Left ventricle myocardium superior (tissue), 1 donor: ENCODE measurements at regions of chr17 and their contacts with region 1.

Region 1: DNA sequence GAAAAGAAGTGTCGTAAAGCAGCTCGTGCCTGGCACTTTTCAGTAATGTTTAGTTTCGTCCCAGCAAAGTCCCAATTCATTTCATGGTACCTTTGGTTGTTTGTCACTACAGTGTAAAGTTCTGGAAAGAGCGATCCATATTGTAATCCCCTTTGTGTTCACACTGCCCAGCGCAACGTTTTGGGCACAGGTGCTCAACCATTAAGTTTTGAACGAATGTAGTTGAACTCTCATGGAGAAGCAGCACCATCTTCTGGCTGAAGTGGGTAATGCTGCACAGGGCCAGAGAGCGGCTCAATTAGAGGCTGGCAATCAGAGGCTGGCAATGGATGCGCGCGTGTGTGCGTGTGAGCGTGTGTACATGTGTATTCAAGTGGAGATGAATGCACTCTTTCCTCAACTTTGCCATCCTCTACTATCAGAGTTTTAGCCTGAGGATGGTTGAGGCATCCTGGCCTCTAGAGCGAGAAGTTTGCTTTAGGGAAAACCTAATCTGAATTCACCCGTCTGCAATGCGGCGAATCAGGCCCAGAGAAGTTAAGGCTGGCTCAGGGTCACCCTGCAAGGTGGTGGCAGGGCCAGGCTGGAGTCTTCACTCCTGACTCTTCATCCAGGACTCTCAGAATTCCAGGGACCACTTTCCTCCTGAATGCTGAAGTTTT is 29.9 kb downstream of the DYNLL2 start:
- DNase-seq: peak; percentile 80
- ATAC-seq: peak; percentile 87

Region 2: DNA sequence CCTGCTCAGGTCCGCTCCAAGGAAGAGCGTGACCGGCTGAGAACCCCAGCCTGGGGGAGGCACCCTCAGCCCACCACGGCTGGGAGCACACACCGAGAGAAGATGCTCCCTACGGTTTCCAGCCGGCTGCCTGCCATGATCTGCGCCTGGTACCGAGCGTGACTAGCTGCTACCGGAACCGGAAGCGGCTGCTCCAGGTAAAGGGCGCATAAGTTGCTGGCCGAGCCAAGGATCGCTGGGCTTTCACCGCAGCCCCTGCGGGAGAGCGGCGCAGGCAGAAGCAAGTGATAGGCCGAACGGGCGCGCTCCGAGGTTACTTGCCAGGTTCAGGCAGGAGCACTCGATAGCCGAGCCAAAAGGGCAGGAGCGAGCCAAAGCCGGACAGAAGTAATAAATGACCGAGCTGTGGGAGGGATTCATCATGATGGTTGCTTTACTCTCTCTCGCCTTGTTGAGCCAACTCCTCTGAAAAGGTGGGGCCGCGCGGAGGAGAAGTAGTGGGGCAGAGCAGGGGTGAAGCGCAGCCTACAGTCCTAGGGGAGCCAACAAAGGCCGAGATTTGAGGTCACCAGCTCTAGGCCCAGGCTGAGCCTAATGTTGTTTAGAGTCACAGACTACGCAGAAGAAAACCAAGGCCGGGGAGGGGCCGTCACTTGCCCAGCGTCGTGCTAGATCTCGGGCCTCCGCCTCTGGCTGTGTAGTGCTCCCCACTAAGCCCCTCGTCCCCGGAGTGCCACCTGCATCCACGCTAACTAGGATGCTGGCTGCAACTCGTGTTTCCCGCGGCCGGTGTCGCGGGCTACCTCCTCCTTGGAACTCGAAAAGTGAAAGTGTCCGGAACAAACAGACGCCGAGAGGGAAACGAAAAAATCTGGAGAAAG is 263.0 kb before region 1 on chr17 and contains the start of gene MRPS23:
- intact Hi-C with region 1: loop called (anchors 10 kb)
- DNase-seq: peak; percentile 99
- ATAC-seq: peak; percentile 81
- total RNA-seq, gene MRPS23: 86.3 TPM

Region 3: GRCh38 chr17:58006924-58007780 is 105.9 kb before region 1 on chr17 and contains the start of gene SRSF1:
- intact Hi-C with region 1: loop called (anchors 10 kb)
- DNase-seq: peak; percentile 99
- ATAC-seq: peak; percentile 96
- total RNA-seq, gene SRSF1: 98.1 TPM